Naive thymus-derived CD4-positive, alpha-beta T cell (primary cell): ENCODE measurements at regions of chr14 and their contacts with region 1.

Region 1: GRCh38 chr14:99266181-99267178 is 5.5 kb downstream of the BCL11B start:
- DNase-seq: peak; percentile 79 to 93 (median 89)
- ATAC-seq: peak; percentile 56
- H3K4me3 ChIP-seq: peak overlapping the region; percentile 90
- H3K4me3 Mint-ChIP-seq: peak overlapping the region; percentile 92 to 100 (median 94)
- H3K27ac ChIP-seq: peak overlapping the region; percentile 98
- H3K27ac Mint-ChIP-seq: peak overlapping the region; percentile 99 to 100 (median 100)
- H3K4me1 ChIP-seq: peaks cover 16 to 39% of the 10 kb centered on the region in 2 donors
- H3K4me1 Mint-ChIP-seq: peaks cover 43 to 66% (median 54%) of the 10 kb centered on the region in 7 donors
- H3K27me3 ChIP-seq: no peaks in the 10 kb centered on the region
- H3K27me3 Mint-ChIP-seq: peaks cover 0 to 10% (median 0%) of the 10 kb centered on the region in 5 donors

Region 2: DNA sequence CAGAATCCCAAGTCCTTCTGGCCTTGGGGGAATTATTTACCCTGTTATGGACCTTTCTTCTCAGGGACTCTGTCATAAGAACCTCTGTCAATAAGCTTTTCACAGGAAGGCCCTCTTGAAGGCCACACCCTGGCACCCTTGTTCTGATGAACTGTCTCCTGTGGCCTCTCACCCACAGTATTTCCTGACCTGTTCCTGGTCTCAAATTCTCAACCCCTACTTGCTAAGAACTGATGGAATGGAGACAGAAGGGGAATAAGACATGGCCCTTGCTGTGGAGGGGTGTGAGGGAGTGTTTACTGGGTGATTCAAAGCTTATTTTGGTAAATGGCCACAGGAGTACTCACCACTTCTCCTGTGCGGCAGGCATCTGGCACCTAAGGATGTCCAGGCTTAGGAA is 1077.4 kb before region 1 on chr14:
- CTCF ChIA-PET with region 1: interaction called, 5 read pairs
- POLR2A ChIA-PET with region 1: interaction called, 323 read pairs
- intact Hi-C with region 1: loop called (anchors 1 to 2 kb)
- DNase-seq: peak in 1 of 9 donors; percentile 50
- ATAC-seq: peak; percentile 40
- H3K4me3 ChIP-seq: peak overlapping the region; percentile 48
- H3K4me3 Mint-ChIP-seq: peak overlapping the region; percentile 63 to 86 (median 76)
- H3K27ac ChIP-seq: peak overlapping the region; percentile 80
- H3K27ac Mint-ChIP-seq: peak overlapping the region; percentile 92 to 100 (median 98)
- H3K4me1 ChIP-seq: peaks cover 82 to 95% of the 10 kb centered on the region in 2 donors
- H3K4me1 Mint-ChIP-seq: peaks cover 56 to 100% (median 98%) of the 10 kb centered on the region in 7 donors
- H3K27me3 ChIP-seq: no peaks in the 10 kb centered on the region
- H3K27me3 Mint-ChIP-seq: no peaks in the 10 kb centered on the region

Region 3: GRCh38 chr14:98227000-98227726 is 1039.3 kb before region 1 on chr14:
- CTCF ChIA-PET with region 1: interaction called, 7 read pairs
- POLR2A ChIA-PET with region 1: interaction called, 17 read pairs
- intact Hi-C with region 1: no loop called
- DNase-seq: peak in 4 of 9 donors; percentile 33 to 57 (median 38)
- ATAC-seq: no peak
- H3K4me3 ChIP-seq: peak overlapping the region; percentile 28
- H3K4me3 Mint-ChIP-seq: peak overlapping the region; percentile 51 to 85 (median 68)
- H3K27ac ChIP-seq: peak overlapping the region; percentile 83
- H3K27ac Mint-ChIP-seq: peak overlapping the region; percentile 92 to 100 (median 96)
- H3K4me1 ChIP-seq: peaks cover 35 to 90% of the 10 kb centered on the region in 2 donors
- H3K4me1 Mint-ChIP-seq: peaks cover 48 to 96% (median 91%) of the 10 kb centered on the region in 7 donors
- H3K27me3 ChIP-seq: no peaks in the 10 kb centered on the region
- H3K27me3 Mint-ChIP-seq: no peaks in the 10 kb centered on the region

Region 4: GRCh38 chr14:98931911-98932310 is 334.6 kb before region 1 on chr14:
- CTCF ChIA-PET with region 1: no interaction called
- POLR2A ChIA-PET with region 1: interaction called, 6 read pairs
- intact Hi-C with region 1: loop called in 1 of 2 experiments (anchors 10 kb)
- DNase-seq: peak; percentile 31 to 90 (median 88)
- ATAC-seq: peak; percentile 97
- H3K4me3 ChIP-seq: peak overlapping the region; percentile 40
- H3K4me3 Mint-ChIP-seq: peak overlapping the region; percentile 66 to 92 (median 80)
- H3K27ac ChIP-seq: peak overlapping the region; percentile 66
- H3K27ac Mint-ChIP-seq: peak overlapping the region; percentile 82 to 98 (median 94)
- H3K4me1 ChIP-seq: peaks cover 31 to 76% of the 10 kb centered on the region in 2 donors
- H3K4me1 Mint-ChIP-seq: peaks cover 51 to 100% (median 99%) of the 10 kb centered on the region in 7 donors
- H3K27me3 ChIP-seq: no peaks in the 10 kb centered on the region
- H3K27me3 Mint-ChIP-seq: peaks cover 0 to 2% (median 0%) of the 10 kb centered on the region in 5 donors

Region 5: GRCh38 chr14:99199846-99200653 is 66.4 kb before region 1 on chr14:
- CTCF ChIA-PET with region 1: interaction called, 10 read pairs
- POLR2A ChIA-PET with region 1: interaction called, 396 read pairs
- intact Hi-C with region 1: no loop called
- DNase-seq: no peak
- ATAC-seq: no peak
- H3K4me3 ChIP-seq: no peak overlapping the region
- H3K4me3 Mint-ChIP-seq: peak overlapping the region; percentile 26 to 94 (median 88)
- H3K27ac ChIP-seq: peak overlapping the region; percentile 85
- H3K27ac Mint-ChIP-seq: peak overlapping the region; percentile 65 to 100 (median 98)
- H3K4me1 ChIP-seq: peaks cover 88 to 100% of the 10 kb centered on the region in 2 donors
- H3K4me1 Mint-ChIP-seq: peaks cover 71 to 100% (median 99%) of the 10 kb centered on the region in 7 donors
- H3K27me3 ChIP-seq: no peaks in the 10 kb centered on the region
- H3K27me3 Mint-ChIP-seq: no peaks in the 10 kb centered on the region

Region 6: DNA sequence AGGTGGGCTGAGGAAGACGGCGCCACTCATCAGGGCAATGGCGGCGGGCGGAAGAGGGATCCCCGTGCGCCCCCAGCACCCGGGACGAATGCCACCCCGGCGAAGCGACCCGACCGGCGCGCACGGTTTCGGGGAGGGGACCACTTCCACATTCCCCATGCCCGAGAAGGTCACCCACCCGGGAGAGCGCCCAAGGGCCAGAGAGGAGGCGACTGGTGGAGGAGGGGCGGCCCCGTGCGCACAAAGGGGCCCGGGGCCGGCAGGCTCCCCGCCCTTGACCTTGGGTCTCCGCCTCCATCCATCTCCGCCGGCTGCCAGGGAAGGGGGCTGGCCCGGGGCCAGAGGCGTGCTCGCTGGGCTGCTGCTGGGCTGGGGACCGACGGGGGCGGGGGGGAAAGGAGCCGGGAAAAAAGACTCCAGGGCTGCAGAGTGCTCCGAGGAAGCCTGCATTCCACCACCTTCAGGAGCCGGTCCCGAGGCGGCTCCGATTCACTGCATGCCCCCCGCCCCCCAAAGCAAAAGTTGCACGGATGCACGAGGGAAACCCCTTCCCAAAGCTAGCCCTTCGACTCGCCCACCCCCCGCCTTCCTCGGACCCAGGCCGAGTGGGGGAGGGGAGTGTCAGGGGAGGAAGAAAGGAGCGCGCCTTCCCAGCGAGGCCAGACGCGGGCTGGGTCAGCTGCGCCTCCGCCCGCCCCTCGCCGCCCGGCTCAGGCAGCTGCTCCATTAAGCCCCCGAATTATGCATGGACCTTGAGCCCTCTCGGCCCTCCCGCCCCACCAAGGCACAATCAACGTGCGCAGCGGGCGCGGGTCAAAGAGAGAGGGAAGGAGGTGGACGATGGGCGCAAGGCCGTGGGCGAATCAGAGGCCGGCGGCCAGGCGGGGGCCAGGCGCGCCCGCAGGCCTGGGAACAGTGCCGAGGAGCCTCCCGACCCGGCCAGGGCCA is 20.6 kb before region 1 on chr14:
- CTCF ChIA-PET with region 1: interaction called, 14 read pairs
- POLR2A ChIA-PET with region 1: interaction called, 1,374 read pairs
- intact Hi-C with region 1: loop called (anchors 1 kb)
- DNase-seq: peak in 2 of 9 donors; percentile 47 to 61
- ATAC-seq: no peak
- H3K4me3 ChIP-seq: peak overlapping the region; percentile 61
- H3K4me3 Mint-ChIP-seq: peak overlapping the region; percentile 81 to 95 (median 90)
- H3K27ac ChIP-seq: peak overlapping the region; percentile 98
- H3K27ac Mint-ChIP-seq: peak overlapping the region; percentile 96 to 100 (median 99)
- H3K4me1 ChIP-seq: peaks cover 74 to 81% of the 10 kb centered on the region in 2 donors
- H3K4me1 Mint-ChIP-seq: peaks cover 48 to 90% (median 84%) of the 10 kb centered on the region in 7 donors
- H3K27me3 ChIP-seq: no peaks in the 10 kb centered on the region
- H3K27me3 Mint-ChIP-seq: peaks cover 0 to 4% (median 0%) of the 10 kb centered on the region in 5 donors